ENCODE measurements at regions of chr19 and their contacts with region 1.

Region 1: DNA sequence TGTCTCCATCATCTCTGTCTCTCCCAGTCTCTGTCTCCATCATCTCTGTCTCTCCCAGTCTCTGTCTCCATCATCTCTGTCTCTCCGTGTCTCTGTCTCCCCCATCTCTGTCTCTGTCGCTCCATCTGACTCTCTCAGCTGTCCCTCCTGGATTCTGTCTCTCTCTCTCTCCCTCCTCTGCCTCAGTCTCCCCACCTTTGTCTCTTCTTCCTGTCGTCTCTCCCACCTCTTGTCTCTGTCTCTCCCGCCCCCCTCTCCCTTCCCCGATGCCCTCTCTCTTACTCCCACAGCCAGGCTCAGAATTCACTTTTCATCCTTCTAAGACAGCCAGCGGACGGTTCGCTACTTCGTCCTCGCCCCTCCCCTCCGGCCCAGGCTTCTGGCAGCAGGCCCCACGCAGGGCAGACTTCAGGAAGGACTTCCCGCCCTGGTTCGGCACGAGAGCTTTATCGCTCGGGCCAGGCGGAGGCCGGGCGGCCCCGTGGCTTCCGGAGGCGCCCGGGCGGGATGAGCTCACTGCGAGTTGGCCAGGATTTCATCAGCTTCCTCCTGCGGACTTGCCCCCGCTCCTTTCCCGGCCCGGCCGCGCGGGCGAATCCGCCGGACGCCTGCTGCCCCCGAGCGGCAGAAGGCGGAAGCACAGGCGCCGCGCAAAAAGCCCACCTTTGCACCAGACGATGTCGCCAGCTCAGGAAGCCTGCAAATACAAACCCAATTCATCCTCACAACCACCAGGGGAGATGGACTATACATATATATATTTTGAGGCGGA is 12.4 kb upstream of the CCDC9 start:
- DNase-seq: peak; percentile 69 to 98 (median 82)

Region 2: GRCh38 chr19:47152224-47153017 is 91.5 kb before region 1 on chr19:
- intact Hi-C with region 1: loop called (anchors 1 kb)
- DNase-seq: peak in 1 of 10 donors; percentile 5

Region 3: DNA sequence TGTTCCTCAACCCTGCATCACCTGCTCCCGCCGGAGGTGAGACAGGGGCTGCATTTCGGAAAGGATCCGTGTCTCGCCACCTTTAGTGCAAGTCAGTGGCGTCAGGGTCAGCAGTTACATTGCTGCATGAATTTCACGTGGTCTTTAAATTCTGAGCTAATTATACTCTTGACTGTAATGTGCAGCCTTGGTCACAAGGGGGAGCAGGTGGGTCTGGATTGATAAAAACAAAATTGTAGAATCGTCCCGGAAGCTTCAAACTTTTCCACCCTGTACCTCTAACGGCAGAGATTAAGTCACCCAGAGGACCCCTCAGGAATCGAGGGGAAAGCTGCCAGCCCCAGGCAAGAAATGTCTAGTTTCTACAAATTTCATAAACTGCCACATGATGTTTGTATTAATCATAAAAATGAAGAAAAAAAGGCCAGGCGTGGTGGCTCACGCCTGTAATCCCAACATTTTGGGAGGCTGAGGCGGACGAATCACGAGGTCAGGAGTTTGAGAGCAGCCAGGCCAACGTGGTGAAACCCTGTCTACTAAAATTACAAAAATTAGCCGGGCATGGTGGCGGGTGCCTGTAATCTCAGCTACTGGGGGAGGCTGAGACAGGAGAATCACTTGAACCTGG is 33.2 kb before region 1 on chr19:
- intact Hi-C with region 1: loop called (anchors 1 kb)
- DNase-seq: peak in 5 of 10 donors; percentile 62 to 87 (median 67)

Region 4: GRCh38 chr19:47273313-47273977 is 29.5 kb after region 1 on chr19:
- intact Hi-C with region 1: no loop called
- DNase-seq: peak; percentile 79 to 99 (median 91)

Measured in posterior cingulate gyrus (tissue), 11 donors.